PC-3 (cell line): ENCODE measurements at regions of chr12 and their contacts with region 1.

Region 1: DNA sequence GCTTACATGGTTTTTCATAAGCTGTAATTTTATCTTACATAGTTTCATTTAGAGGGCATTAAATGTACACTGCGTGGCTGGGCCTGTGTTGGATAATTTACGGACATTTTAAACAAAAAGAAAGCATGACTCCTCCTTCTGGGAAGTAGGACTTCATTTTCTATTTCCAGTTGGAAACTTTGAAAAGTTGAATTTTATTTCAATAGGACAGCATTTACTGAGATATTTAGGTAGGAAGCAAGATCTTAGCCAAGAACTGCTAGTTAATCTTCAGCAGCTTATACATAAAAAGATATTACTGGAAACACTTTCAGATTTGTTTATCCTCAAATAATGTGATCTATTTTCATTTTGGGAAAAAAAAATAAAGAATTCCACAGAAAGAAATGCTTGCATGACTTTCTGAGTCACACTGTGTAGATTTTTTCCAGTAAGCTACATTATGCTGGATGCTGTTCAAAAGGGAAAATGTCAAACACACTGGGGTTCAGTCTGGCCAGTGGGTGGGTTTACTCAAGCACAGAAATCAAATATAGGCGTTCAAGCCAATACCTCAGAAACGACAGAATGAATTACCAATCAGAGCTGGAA is 239.4 kb upstream of the KRR1 start:
- DNase-seq: no peak
- ATAC-seq: no peak
- H3K4me3 ChIP-seq: no peak overlapping the region
- H3K27ac ChIP-seq: no peak overlapping the region
- H3K4me1 ChIP-seq: peaks cover 6% of the 10 kb centered on the region
- H3K27me3 ChIP-seq: no peaks in the 10 kb centered on the region
- CTCF ChIP-seq: no peak

Region 2: GRCh38 chr12:75831402-75831801 is 80.6 kb after region 1 on chr12:
- CTCF ChIA-PET with region 1: no interaction called
- POLR2A ChIA-PET with region 1: interaction called, 11 read pairs
- intact Hi-C with region 1: no loop called
- DNase-seq: no peak
- ATAC-seq: no peak
- H3K4me3 ChIP-seq: no peak overlapping the region
- H3K27ac ChIP-seq: no peak overlapping the region
- H3K4me1 ChIP-seq: peaks cover 3% of the 10 kb centered on the region
- H3K27me3 ChIP-seq: no peaks in the 10 kb centered on the region
- CTCF ChIP-seq: no peak